Naive thymus-derived CD4-positive, alpha-beta T cell (primary cell): ENCODE measurements at regions of chr5 and their contacts with region 1.

Region 1: GRCh38 chr5:66161356-66161755 is 17.3 kb downstream of the SREK1 start:
- DNase-seq: no peak
- ATAC-seq: no peak
- H3K4me3 ChIP-seq: no peak overlapping the region
- H3K4me3 Mint-ChIP-seq: no peak overlapping the region
- H3K27ac ChIP-seq: no peak overlapping the region
- H3K27ac Mint-ChIP-seq: no peak overlapping the region
- H3K4me1 ChIP-seq: no peaks in the 10 kb centered on the region
- H3K4me1 Mint-ChIP-seq: peaks cover 3 to 19% (median 14%) of the 10 kb centered on the region in 7 donors
- H3K27me3 ChIP-seq: no peaks in the 10 kb centered on the region
- H3K27me3 Mint-ChIP-seq: no peaks in the 10 kb centered on the region

Region 2: DNA sequence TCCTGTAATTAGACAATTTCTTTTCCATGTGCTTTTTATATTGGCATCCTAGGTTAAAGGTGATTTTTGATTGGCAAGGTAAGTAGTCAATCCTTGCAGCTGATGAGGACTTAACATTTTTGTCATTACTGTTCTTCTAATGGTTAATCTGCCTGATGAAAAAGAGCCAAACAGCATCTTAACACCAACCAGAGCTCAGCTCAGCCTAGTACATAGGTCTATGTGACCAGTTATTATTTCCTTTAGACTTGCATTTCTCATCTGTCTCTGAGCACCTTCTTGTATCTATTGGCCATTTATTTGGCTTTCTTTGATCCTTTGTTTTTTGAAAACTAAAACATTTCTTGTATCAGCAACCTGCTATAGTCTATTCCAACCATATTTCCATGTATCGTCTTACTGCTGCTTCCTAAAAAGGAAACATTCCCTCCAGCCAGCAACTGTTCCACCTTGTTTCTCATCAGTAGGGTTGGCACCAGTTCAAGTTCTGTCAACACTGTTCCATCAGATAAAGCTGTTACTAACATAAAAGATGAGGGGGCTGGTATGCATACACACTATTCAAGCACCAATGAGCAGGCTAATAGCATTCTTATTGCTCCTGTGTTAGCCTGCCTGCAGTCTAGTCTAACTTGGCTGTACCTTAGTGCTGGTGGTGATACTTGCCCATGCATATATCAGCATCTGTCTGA is 1214.5 kb before region 1 on chr5:
- CTCF ChIA-PET with region 1: no interaction called
- POLR2A ChIA-PET with region 1: no interaction called
- intact Hi-C with region 1: no loop called
- DNase-seq: no peak
- ATAC-seq: no peak
- H3K4me3 ChIP-seq: no peak overlapping the region
- H3K4me3 Mint-ChIP-seq: no peak overlapping the region
- H3K27ac ChIP-seq: no peak overlapping the region
- H3K27ac Mint-ChIP-seq: no peak overlapping the region
- H3K4me1 ChIP-seq: no peaks in the 10 kb centered on the region
- H3K4me1 Mint-ChIP-seq: peaks cover 0 to 10% (median 0%) of the 10 kb centered on the region in 7 donors
- H3K27me3 ChIP-seq: no peaks in the 10 kb centered on the region
- H3K27me3 Mint-ChIP-seq: no peaks in the 10 kb centered on the region

Region 3: GRCh38 chr5:66151030-66151429 is 10.3 kb before region 1 on chr5:
- CTCF ChIA-PET with region 1: interaction called, 3 read pairs
- POLR2A ChIA-PET with region 1: interaction called, 3 read pairs
- intact Hi-C with region 1: loop called in 1 of 2 experiments (anchors 1 kb)
- DNase-seq: peak in 1 of 9 donors; percentile 26
- ATAC-seq: no peak
- H3K4me3 ChIP-seq: no peak overlapping the region
- H3K4me3 Mint-ChIP-seq: peak overlapping the region in 3 of 10 donors; percentile 2 to 33 (median 24)
- H3K27ac ChIP-seq: no peak overlapping the region
- H3K27ac Mint-ChIP-seq: peak overlapping the region in 3 of 9 donors; percentile 3 to 18 (median 6)
- H3K4me1 ChIP-seq: peaks cover 12 to 16% of the 10 kb centered on the region in 2 donors
- H3K4me1 Mint-ChIP-seq: peaks cover 31 to 75% (median 65%) of the 10 kb centered on the region in 7 donors
- H3K27me3 ChIP-seq: no peaks in the 10 kb centered on the region
- H3K27me3 Mint-ChIP-seq: no peaks in the 10 kb centered on the region